ENCODE measurements at regions of chr11 and their contacts with region 1.

Region 1: DNA sequence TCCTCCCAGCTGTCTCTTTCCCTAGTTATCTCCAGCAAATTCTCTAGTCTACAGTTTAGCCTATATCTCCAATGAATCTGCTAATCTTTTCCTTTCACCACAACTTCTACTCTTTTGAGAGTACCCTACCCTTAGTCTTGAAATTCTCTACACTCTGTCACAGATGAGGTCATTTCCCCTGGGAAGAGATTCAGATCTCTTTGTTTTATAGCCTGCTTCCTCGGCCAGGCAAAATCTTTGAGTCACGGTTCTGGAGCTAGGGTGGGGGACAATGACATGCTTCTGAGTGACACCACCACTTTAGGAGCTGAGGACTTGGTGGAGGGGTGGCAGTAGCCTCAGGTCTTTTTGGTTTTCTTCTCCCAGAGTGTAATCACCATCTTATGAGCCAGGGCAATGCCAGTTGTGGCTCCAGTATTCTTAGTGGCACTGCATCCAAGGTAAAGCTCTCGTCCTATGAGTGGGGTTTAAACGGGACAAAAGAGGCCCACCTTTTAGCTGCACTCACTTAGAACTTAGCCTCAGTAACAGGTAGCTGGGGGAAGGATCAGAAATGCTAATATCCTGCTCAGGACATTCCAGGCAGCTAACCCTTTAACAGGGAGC is 98.5 kb upstream of the RRM1 start:
- DNase-seq: peak; percentile 81 to 89 (median 83)
- H3K4me3 ChIP-seq: peak overlapping the region in 1 of 7 experiments; percentile 25
- H3K27ac ChIP-seq: peak overlapping the region; percentile 9 to 75
- H3K4me1 ChIP-seq: peaks cover 0 to 10% (median 8%) of the 10 kb centered on the region in 4 experiments
- H3K27me3 ChIP-seq: no peaks in the 10 kb centered on the region

Region 2: GRCh38 chr11:4006946-4007680 is 11.1 kb after region 1 on chr11:
- CTCF ChIA-PET with region 1: interaction called, 14 read pairs
- POLR2A ChIA-PET with region 1: no interaction called
- DNase-seq: no peak
- H3K4me3 ChIP-seq: no peak overlapping the region
- H3K27ac ChIP-seq: no peak overlapping the region
- H3K4me1 ChIP-seq: no peaks in the 10 kb centered on the region
- H3K27me3 ChIP-seq: no peaks in the 10 kb centered on the region

Region 3: DNA sequence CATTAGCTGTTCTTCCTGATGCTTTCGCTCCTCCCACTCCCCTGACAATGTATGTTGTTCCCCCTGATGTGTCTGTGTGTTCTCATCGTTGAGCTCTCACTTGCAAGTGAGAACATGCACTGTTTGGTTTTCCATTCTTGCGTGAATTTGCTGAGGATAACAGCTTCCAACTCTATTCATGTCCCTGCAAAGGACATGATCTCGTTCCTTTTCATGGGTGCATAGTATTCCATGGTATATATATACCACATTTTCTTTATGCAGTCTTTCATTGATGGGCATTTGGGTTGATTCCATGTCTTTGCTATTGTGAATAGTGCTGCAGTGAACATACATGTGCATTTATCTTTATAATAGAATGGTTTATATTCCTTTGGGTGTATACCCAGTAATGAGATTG is 39.9 kb after region 1 on chr11:
- CTCF ChIA-PET with region 1: no interaction called
- POLR2A ChIA-PET with region 1: no interaction called
- DNase-seq: no peak
- H3K4me3 ChIP-seq: no peak overlapping the region
- H3K27ac ChIP-seq: no peak overlapping the region
- H3K4me1 ChIP-seq: no peaks in the 10 kb centered on the region
- H3K27me3 ChIP-seq: no peaks in the 10 kb centered on the region

Measured in common myeloid progenitor, CD34-positive (primary cell).